WTC11 (cell line): ENCODE measurements at regions of chr17 and their contacts with region 1.

Region 1: DNA sequence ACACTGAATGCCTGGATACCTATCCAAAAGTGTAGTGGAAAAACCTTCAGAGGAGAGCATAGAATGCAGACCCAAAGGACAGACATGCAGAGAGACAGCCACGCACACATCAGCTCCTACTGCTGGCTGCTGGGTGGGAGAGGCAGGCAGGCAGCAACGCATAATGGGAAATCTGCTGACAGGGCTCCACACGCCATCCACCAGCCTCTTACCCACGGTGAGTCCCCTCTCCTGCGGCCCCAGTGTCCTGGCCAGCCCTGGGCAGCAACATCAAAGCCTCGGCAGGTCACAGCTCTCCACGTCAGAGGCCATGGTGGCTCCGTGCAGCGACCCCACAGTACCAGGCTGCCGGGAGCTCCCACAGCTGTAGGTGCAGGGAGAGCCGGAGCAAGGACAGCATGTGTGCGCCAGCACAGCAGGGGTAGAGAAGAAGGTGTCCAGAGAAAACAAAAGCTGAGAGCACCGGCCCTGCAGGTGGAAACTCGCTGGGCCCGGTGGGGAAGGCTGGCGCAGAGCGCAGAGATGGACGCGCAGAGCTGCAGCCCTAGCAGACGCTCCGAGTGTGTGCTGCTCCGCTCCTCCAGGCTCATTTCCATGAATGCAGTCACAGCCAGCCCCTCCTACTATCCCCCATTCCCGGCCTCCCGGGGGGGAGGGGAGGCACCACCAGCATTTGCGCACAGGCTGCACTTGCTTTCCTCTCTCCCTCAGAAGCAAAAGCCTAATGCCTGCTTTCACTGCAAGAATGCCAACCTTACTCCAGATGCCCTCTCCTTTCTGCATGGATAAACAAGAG is 58.9 kb downstream of the CYTH1 start:
- DNase-seq: peak; percentile 78
- ATAC-seq: peak; percentile 90
- H3K4me3 Mint-ChIP-seq: peak overlapping the region; percentile 73
- H3K27ac Mint-ChIP-seq: peak overlapping the region; percentile 73
- H3K4me1 Mint-ChIP-seq: peaks cover 67% of the 10 kb centered on the region
- H3K27me3 Mint-ChIP-seq: peaks cover 5% of the 10 kb centered on the region; the same call in 1 of the 2 replicates
- CTCF ChIP-seq: no peak

Region 2: DNA sequence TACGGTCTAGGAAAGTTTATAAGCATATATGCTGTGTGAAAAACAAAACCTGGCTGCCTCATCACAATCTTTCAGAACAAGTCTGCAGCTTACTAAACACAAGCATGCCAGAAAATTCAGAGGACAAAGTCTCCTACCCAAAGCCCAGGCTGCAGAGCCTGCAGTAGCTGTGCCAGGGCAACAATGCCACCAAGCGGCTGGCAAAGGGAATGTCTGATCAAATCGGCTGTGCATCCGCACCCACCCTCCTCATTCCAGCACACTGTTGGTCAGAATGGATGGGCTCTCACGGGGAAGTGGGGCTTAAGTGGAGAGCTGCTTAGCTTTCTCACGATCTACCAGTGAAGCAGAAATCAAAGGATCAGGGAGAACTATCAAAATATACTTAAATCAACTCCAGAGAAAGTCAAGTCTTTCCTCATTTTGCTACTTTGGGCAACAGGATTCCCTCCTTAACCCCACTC is 14.7 kb before region 1 on chr17:
- CTCF ChIA-PET with region 1: interaction called, 40 read pairs
- POLR2A ChIA-PET with region 1: no interaction called
- DNase-seq: peak; percentile 76
- ATAC-seq: peak; percentile 99
- H3K4me3 Mint-ChIP-seq: no peak overlapping the region
- H3K27ac Mint-ChIP-seq: no peak overlapping the region
- H3K4me1 Mint-ChIP-seq: peaks cover 3% of the 10 kb centered on the region; the same call in 1 of the 2 replicates
- H3K27me3 Mint-ChIP-seq: no peaks in the 10 kb centered on the region
- CTCF ChIP-seq: peak; percentile 66